ENCODE measurements at regions of chr21 and their contacts with region 1.

Region 1: DNA sequence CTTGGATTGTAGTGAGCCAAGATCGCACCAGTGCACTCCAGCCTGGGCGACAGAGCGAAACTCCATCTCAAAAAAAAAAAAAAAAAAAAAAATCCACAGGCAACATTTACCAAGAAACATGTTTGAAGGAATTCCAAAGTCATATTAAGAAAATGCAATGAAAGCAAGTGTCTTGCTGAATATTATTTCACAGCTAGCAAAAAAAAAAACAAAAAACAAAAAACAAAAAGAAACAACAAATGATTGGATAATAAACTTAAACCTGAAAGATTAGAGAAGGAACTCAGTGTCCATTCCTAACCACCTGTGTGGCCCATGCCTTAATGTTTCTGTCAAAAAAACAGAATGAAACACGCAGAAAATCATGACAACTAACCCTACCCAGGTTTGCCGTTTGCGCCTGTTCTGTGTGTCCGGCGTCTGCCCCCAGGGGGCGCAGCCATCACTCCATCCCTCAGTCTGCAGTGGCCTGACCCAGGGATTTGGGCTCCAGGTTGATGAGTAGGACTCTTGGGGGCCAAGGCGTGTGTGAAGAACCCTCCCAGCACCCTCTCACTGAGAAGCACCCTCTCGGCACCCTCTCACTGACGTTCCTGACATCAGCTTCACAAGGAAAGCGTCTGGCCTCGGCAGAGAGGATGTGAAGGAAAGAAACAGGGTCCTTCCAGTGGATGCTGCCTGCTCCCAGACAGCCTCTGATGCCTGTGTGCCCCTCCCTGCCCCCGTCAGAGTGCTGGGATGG is 19.2 kb upstream of the PTTG1IP start:
- DNase-seq: peak; percentile 94
- H3K4me3 Mint-ChIP-seq: no peak overlapping the region
- H3K27ac Mint-ChIP-seq: peak overlapping the region; percentile 54
- H3K4me1 Mint-ChIP-seq: peaks cover 6% of the 10 kb centered on the region
- H3K27me3 Mint-ChIP-seq: no peaks in the 10 kb centered on the region

Region 2: GRCh38 chr21:44911389-44912157 is 18.9 kb after region 1 on chr21:
- intact Hi-C with region 1: loop called (anchors 2 kb)
- DNase-seq: peak; percentile 86
- H3K4me3 Mint-ChIP-seq: peak overlapping the region; percentile 67
- H3K27ac Mint-ChIP-seq: peak overlapping the region; percentile 76
- H3K4me1 Mint-ChIP-seq: peaks cover 55% of the 10 kb centered on the region
- H3K27me3 Mint-ChIP-seq: no peaks in the 10 kb centered on the region